HCT116 (cell line): ENCODE measurements at regions of chr2 and their contacts with region 1.

Region 1: GRCh38 chr2:105037572-105038382 is at the start of gene MRPS9:
- DNase-seq: peak; percentile 91
- ATAC-seq: peak; percentile 98
- H3K4me3 ChIP-seq: peak within 1 kb of the TSS; percentile 88 to 89
- H3K27ac ChIP-seq: peak within 1 kb of the TSS; percentile 75
- H3K4me1 ChIP-seq: peaks cover 0 to 19% of the 10 kb centered on the region in 2 experiments; a peak in 3 of 4 replicates
- H3K27me3 ChIP-seq: no peaks in the 10 kb centered on the region
- CTCF ChIP-seq: no peak
- POLR2A ChIP-seq: peak; percentile 71
- RAD21 ChIP-seq: no peak
- total RNA-seq, gene MRPS9: 49.7 TPM

Region 2: GRCh38 chr2:104818264-104818663 is 219.5 kb before region 1 on chr2:
- CTCF ChIA-PET with region 1: no interaction called
- POLR2A ChIA-PET with region 1: no interaction called
- RAD21 ChIA-PET with region 1: no interaction called
- intact Hi-C with region 1: no loop called
- DNase-seq: no peak
- ATAC-seq: no peak
- H3K4me3 ChIP-seq: no peak overlapping the region
- H3K27ac ChIP-seq: no peak overlapping the region
- H3K4me1 ChIP-seq: no peaks in the 10 kb centered on the region
- H3K27me3 ChIP-seq: no peaks in the 10 kb centered on the region
- CTCF ChIP-seq: no peak
- POLR2A ChIP-seq: no peak
- RAD21 ChIP-seq: no peak

Region 3: DNA sequence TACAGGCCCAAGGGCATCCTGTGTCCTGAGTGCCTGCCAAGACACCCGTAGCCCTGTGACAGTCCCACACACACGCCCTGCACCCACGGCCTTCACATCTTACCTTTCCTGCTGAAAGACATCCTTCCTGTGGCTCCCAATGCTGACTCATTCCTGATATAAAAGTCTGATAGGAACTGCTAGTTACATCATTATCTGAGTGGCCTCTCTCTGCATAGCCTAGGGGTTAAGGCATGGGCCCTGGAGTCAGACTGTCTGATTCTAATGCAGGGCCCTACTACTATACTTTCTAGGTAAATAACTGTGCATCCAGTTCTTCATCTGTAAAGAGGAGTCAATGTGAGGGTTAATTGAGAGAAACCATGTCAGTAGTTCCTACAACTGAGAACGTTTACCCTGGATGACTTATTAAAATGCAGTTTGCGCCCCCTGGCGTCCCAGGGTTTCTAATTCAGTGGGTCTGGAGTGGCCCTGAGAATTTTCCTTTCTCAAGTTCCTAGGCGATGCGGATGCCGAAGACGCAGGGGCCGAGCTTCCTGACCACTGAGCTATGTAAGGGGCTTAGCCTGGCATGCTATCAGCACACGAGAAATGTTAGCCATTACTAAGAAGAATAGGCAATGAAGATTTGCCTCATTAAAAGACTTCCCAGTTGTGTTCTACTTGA is 197.7 kb after region 1 on chr2:
- CTCF ChIA-PET with region 1: no interaction called
- POLR2A ChIA-PET with region 1: no interaction called
- RAD21 ChIA-PET with region 1: no interaction called
- intact Hi-C with region 1: loop called (anchors 5 kb)
- DNase-seq: peak; percentile 83
- ATAC-seq: peak; percentile 84
- H3K4me3 ChIP-seq: peak overlapping the region in 1 of 2 experiments; percentile 12; a peak in 2 of 4 replicates
- H3K27ac ChIP-seq: no peak overlapping the region
- H3K4me1 ChIP-seq: peaks cover 16 to 31% of the 10 kb centered on the region in 2 experiments
- H3K27me3 ChIP-seq: no peaks in the 10 kb centered on the region
- CTCF ChIP-seq: peak; percentile 77 to 90 (median 88)
- POLR2A ChIP-seq: no peak
- RAD21 ChIP-seq: peak; percentile 84